Caco-2 (cell line): ENCODE measurements at regions of chr19 and their contacts with region 1.

Region 1: GRCh38 chr19:50167314-50167721 is 4.2 kb upstream of the IZUMO2 start:
- DNase-seq: no peak
- H3K4me3 ChIP-seq: no peak overlapping the region
- H3K4me3 Mint-ChIP-seq: no peak overlapping the region
- H3K27ac Mint-ChIP-seq: no peak overlapping the region
- H3K4me1 ChIP-seq: no peaks in the 10 kb centered on the region
- H3K4me1 Mint-ChIP-seq: peaks cover 14% of the 10 kb centered on the region
- H3K27me3 ChIP-seq: no peaks in the 10 kb centered on the region
- H3K27me3 Mint-ChIP-seq: peaks cover 6% of the 10 kb centered on the region
- CTCF ChIP-seq: no peak

Region 2: GRCh38 chr19:50178859-50179537 is 11.7 kb after region 1 on chr19:
- CTCF ChIA-PET with region 1: no interaction called
- POLR2A ChIA-PET with region 1: no interaction called
- intact Hi-C with region 1: no loop called
- DNase-seq: no peak
- H3K4me3 ChIP-seq: no peak overlapping the region
- H3K4me3 Mint-ChIP-seq: no peak overlapping the region
- H3K27ac Mint-ChIP-seq: no peak overlapping the region
- H3K4me1 ChIP-seq: no peaks in the 10 kb centered on the region
- H3K4me1 Mint-ChIP-seq: no peaks in the 10 kb centered on the region
- H3K27me3 ChIP-seq: no peaks in the 10 kb centered on the region
- H3K27me3 Mint-ChIP-seq: no peaks in the 10 kb centered on the region
- CTCF ChIP-seq: no peak

Region 3: GRCh38 chr19:50249636-50250035 is 82.3 kb after region 1 on chr19:
- CTCF ChIA-PET with region 1: interaction called, 12 read pairs
- POLR2A ChIA-PET with region 1: no interaction called
- intact Hi-C with region 1: no loop called
- DNase-seq: no peak
- H3K4me3 ChIP-seq: no peak overlapping the region
- H3K4me3 Mint-ChIP-seq: no peak overlapping the region
- H3K27ac Mint-ChIP-seq: no peak overlapping the region
- H3K4me1 ChIP-seq: no peaks in the 10 kb centered on the region
- H3K4me1 Mint-ChIP-seq: no peaks in the 10 kb centered on the region
- H3K27me3 ChIP-seq: no peaks in the 10 kb centered on the region
- H3K27me3 Mint-ChIP-seq: no peaks in the 10 kb centered on the region
- CTCF ChIP-seq: no peak

Region 4: GRCh38 chr19:50315773-50316448 is 148.6 kb after region 1 on chr19:
- CTCF ChIA-PET with region 1: no interaction called
- POLR2A ChIA-PET with region 1: no interaction called
- intact Hi-C with region 1: loop called (anchors 5 kb)
- DNase-seq: peak; percentile 58 to 68
- H3K4me3 ChIP-seq: peak overlapping the region; percentile 40
- H3K4me3 Mint-ChIP-seq: peak overlapping the region; percentile 75
- H3K27ac Mint-ChIP-seq: peak overlapping the region; percentile 14
- H3K4me1 ChIP-seq: peaks cover 11% of the 10 kb centered on the region; the same call in 1 of the 2 replicates
- H3K4me1 Mint-ChIP-seq: peaks cover 17% of the 10 kb centered on the region
- H3K27me3 ChIP-seq: no peaks in the 10 kb centered on the region; the same call in 1 of the 2 replicates
- H3K27me3 Mint-ChIP-seq: peaks cover 9% of the 10 kb centered on the region
- CTCF ChIP-seq: no peak